ENCODE measurements at regions of chr11 and their contacts with region 1.

Region 1: GRCh38 chr11:27183672-27184457 is 143.2 kb downstream of the BBOX1 start:
- DNase-seq: peak in 1 of 2 donors; percentile 69
- H3K4me3 ChIP-seq: no peak overlapping the region
- H3K27ac ChIP-seq: no peak overlapping the region
- H3K4me1 ChIP-seq: no peaks in the 10 kb centered on the region
- H3K27me3 ChIP-seq: no peaks in the 10 kb centered on the region
- CTCF ChIP-seq: peak; percentile 46 to 77 (median 72)

Region 2: GRCh38 chr11:27296497-27296896 is 112.6 kb after region 1 on chr11:
- intact Hi-C with region 1: loop called (anchors 1 kb)
- DNase-seq: no peak
- H3K4me3 ChIP-seq: no peak overlapping the region
- H3K27ac ChIP-seq: no peak overlapping the region
- H3K4me1 ChIP-seq: no peaks in the 10 kb centered on the region
- H3K27me3 ChIP-seq: no peaks in the 10 kb centered on the region
- CTCF ChIP-seq: peak; percentile 19 to 60 (median 36)

Region 3: GRCh38 chr11:27385245-27385644 is 201.4 kb after region 1 on chr11:
- intact Hi-C with region 1: loop called (anchors 10 kb)
- DNase-seq: peak in 1 of 2 donors; percentile 77
- H3K4me3 ChIP-seq: peak overlapping the region; percentile 33 to 36
- H3K27ac ChIP-seq: peak overlapping the region; percentile 39 to 55
- H3K4me1 ChIP-seq: peaks cover 0 to 18% of the 10 kb centered on the region in 2 donors
- H3K27me3 ChIP-seq: no peaks in the 10 kb centered on the region
- CTCF ChIP-seq: no peak